CD14-positive monocyte (primary cell): ENCODE measurements at regions of chr3 and their contacts with region 1.

Region 1: GRCh38 chr3:12135029-12135657 is 23.6 kb downstream of the TIMP4 start:
- DNase-seq: peak; percentile 57 to 71 (median 69)
- H3K4me3 ChIP-seq: no peak overlapping the region
- H3K4me3 Mint-ChIP-seq: no peak overlapping the region
- H3K27ac ChIP-seq: no peak overlapping the region
- H3K27ac Mint-ChIP-seq: no peak overlapping the region
- H3K4me1 ChIP-seq: no peaks in the 10 kb centered on the region
- H3K4me1 Mint-ChIP-seq: peaks cover 4% of the 10 kb centered on the region
- H3K27me3 ChIP-seq: peaks cover 7 to 12% of the 10 kb centered on the region in 2 donors
- H3K27me3 Mint-ChIP-seq: peaks cover 9 to 16% (median 14%) of the 10 kb centered on the region in 3 donors
- CTCF ChIP-seq: peak; percentile 93

Region 2: GRCh38 chr3:12175844-12176453 is 40.8 kb after region 1 on chr3:
- intact Hi-C with region 1: loop called (anchors 5 kb)
- DNase-seq: peak in 2 of 3 donors; percentile 63 to 67
- H3K4me3 ChIP-seq: no peak overlapping the region
- H3K4me3 Mint-ChIP-seq: no peak overlapping the region
- H3K27ac ChIP-seq: no peak overlapping the region
- H3K27ac Mint-ChIP-seq: peak overlapping the region in 2 of 7 donors; percentile 1 to 69
- H3K4me1 ChIP-seq: peaks cover 40 to 43% of the 10 kb centered on the region in 2 donors
- H3K4me1 Mint-ChIP-seq: peaks cover 44% of the 10 kb centered on the region
- H3K27me3 ChIP-seq: no peaks in the 10 kb centered on the region
- H3K27me3 Mint-ChIP-seq: peaks cover 0 to 4% (median 2%) of the 10 kb centered on the region in 3 donors
- CTCF ChIP-seq: peak; percentile 89

Region 3: DNA sequence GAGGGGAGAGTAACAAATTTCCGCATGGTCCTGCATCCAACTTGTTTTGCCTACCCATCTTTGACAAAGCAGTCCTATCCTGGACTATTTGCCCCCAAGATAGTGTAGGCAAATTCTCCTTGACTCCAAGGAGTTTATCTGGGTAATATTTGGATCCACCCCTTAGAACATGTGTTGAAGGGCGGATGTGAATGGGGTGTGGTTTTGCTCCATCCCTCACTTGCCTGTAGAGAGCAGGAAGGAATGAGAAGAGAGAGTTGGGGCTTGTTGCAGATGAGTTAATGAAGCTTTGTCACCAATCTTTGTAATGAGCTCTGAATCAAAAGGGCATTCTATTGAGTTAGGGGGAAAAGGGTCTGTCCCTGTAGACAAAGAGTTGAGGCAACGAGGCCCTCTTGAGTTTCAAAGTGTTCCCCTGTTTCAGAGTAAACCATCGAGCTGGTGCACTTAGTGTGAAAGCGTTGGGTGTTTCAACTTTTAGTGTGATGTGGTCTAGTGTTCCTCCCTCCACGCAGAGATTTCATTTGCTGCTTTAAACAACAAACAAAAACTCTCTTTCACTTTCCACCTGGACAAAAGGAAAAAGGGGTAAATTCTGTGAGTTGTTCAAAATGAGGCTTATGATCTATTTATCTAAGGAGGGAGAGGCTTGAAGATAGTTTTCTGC is 111.5 kb after region 1 on chr3:
- intact Hi-C with region 1: loop called in 1 of 2 experiments (anchors 10 kb)
- DNase-seq: no peak
- H3K4me3 ChIP-seq: no peak overlapping the region
- H3K4me3 Mint-ChIP-seq: no peak overlapping the region
- H3K27ac ChIP-seq: no peak overlapping the region
- H3K27ac Mint-ChIP-seq: no peak overlapping the region
- H3K4me1 ChIP-seq: no peaks in the 10 kb centered on the region
- H3K4me1 Mint-ChIP-seq: peaks cover 7% of the 10 kb centered on the region
- H3K27me3 ChIP-seq: peaks cover 0 to 4% of the 10 kb centered on the region in 2 donors
- H3K27me3 Mint-ChIP-seq: peaks cover 0 to 9% (median 3%) of the 10 kb centered on the region in 3 donors
- CTCF ChIP-seq: no peak

Region 4: DNA sequence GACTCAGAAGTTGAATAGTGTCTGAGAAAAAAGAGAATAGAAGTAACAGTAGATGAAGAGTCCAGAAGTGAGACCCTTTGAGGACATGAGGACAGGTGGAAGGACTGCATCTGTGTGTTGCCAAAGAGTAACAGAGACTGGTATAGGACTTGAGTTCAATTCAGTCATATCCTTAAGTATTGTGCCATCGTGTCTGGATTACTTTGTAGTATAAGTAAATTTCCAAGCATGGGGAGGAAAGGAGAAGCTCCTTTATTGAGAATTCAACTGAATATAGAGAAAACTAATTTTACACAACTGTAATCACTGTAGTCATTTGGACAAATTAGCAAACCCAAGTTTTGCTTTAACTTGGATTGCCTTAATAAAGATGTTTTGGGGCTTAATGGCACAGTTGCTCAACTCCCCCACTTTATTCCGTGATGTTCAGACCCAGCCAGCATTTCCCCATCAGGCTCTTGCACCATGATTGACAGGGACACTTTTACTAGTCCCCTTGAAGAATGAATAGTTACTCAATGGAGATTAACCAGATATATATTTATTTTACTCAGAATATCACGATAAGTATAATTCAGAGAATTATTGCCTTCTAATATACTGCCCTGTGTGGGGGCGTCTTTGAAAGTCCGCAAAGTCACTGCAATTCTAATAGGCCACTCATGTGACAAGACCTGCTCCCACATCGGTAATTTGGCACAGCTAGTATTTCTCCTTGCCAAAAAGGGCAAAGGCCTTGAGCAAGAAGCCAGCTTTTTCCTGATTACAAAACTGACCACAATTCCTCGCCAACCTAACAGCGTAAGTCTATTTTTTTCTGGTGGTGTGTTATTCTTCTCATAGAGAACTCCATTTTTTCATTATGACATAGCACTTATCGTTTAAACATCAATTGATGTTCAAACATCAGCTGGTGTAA is 215.0 kb after region 1 on chr3:
- intact Hi-C with region 1: no loop called
- DNase-seq: peak; percentile 66 to 88 (median 74)
- H3K4me3 ChIP-seq: no peak overlapping the region
- H3K4me3 Mint-ChIP-seq: no peak overlapping the region
- H3K27ac ChIP-seq: peak overlapping the region; percentile 6 to 52
- H3K27ac Mint-ChIP-seq: peak overlapping the region; percentile 84 to 93 (median 89)
- H3K4me1 ChIP-seq: peaks cover 55 to 62% of the 10 kb centered on the region in 2 donors
- H3K4me1 Mint-ChIP-seq: peaks cover 63% of the 10 kb centered on the region
- H3K27me3 ChIP-seq: no peaks in the 10 kb centered on the region
- H3K27me3 Mint-ChIP-seq: peaks cover 0 to 2% (median 0%) of the 10 kb centered on the region in 3 donors
- CTCF ChIP-seq: no peak

Region 5: DNA sequence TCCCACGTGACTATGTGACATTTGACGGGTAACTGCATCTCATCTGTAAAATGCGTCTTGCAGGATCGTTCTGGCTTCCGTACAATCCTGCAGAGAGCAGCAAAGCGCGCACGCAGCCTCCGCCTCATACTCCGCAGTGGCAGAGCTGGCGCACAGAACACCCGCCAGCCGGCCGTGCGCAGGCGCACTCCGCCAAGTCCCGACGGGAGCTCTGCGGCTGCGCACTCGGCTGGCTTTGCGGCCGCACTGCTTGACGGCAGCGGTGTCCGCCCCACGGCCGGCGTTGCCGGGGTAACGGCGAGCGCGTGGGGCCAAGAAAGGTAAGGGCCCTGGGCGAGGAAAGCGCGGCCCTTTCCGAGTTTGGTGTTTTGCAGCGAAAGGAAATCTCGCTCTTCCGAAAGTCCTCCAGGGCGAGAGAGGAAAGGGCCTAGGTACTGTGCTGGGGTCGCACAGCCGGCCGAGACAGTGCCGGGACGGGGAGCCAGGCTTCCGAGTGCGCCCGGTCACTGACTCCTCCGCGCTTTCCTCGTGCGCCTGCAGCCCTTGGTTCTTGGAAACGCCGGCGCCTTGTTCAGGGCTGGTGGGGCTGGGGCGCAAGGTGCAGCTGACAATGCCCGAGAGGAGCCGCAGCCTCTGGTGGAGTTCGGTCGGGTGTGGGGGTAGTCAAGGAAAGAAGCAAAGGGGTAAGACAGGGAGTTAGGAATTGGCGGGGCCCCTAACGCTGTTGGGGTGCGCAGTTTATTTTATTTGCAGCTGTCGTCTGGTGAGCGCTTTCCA is 349.2 kb after region 1 on chr3 and contains the start of gene TSEN2:
- intact Hi-C with region 1: loop called (anchors 2 kb)
- DNase-seq: peak; percentile 94 to 96 (median 95)
- H3K4me3 ChIP-seq: peak within 1 kb of the TSS; percentile 66 to 93 (median 91)
- H3K4me3 Mint-ChIP-seq: peak within 1 kb of the TSS; percentile 96 to 98
- H3K27ac ChIP-seq: peak within 1 kb of the TSS; percentile 83 to 84
- H3K27ac Mint-ChIP-seq: peak within 1 kb of the TSS; percentile 91 to 97 (median 95)
- H3K4me1 ChIP-seq: peaks cover 51 to 55% of the 10 kb centered on the region in 2 donors
- H3K4me1 Mint-ChIP-seq: peaks cover 53% of the 10 kb centered on the region
- H3K27me3 ChIP-seq: no peaks in the 10 kb centered on the region
- H3K27me3 Mint-ChIP-seq: peaks cover 0 to 2% (median 0%) of the 10 kb centered on the region in 3 donors
- CTCF ChIP-seq: no peak
- polyA plus RNA-seq, gene TSEN2: 3.2 to 7.3 (median 3.9) TPM

Region 6: GRCh38 chr3:12719984-12720898 is 585.1 kb after region 1 on chr3:
- intact Hi-C with region 1: loop called in 1 of 2 experiments (anchors 10 kb)
- DNase-seq: peak; percentile 84 to 93 (median 89)
- H3K4me3 ChIP-seq: peak overlapping the region in 1 of 3 experiments; percentile 28
- H3K4me3 Mint-ChIP-seq: peak overlapping the region; percentile 48 to 72
- H3K27ac ChIP-seq: peak overlapping the region in 1 of 2 donors; percentile 31
- H3K27ac Mint-ChIP-seq: peak overlapping the region; percentile 29 to 93 (median 84)
- H3K4me1 ChIP-seq: peaks cover 14 to 20% of the 10 kb centered on the region in 2 donors
- H3K4me1 Mint-ChIP-seq: peaks cover 21% of the 10 kb centered on the region
- H3K27me3 ChIP-seq: no peaks in the 10 kb centered on the region
- H3K27me3 Mint-ChIP-seq: peaks cover 0 to 3% (median 2%) of the 10 kb centered on the region in 3 donors
- CTCF ChIP-seq: peak; percentile 94